Caco-2 (cell line): ENCODE measurements at regions of chr13 and their contacts with region 1.

Region 1: DNA sequence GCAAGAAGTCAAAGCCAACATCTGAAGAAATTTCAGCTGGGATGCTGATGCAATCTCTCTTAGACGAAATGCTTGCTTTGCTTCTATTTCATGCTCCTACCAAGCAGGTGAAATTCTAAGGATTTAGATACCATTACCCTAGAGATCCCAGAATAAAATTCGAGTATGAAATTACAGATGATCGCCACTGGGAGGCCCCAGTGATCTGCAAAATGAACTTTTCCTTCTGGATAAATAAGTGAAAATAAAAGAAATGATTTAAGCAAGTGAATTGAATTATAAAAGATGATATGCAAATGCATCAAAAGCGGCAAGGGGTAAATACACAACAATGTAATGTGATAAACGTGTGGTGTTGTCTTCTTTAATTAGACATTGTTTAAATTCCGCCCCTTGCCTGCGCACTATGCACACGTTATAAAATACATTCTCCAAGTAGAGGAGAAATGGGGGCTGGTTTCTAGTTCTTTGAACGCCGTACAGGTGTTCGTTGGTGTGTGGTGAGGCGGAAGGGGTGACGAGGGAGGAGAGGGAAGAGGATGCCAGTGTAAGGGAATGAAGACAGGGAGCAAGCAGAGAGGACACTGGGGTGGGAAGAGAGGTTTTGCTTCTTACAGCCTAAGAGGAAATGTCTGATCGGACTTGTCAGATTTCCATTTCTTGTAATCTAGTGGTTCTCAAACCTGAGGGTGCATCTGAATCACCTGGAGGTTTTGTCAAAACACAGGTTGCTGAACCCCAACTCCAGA is 58.0 kb downstream of the ERCC5 start:
- DNase-seq: no peak
- H3K4me3 ChIP-seq: no peak overlapping the region
- H3K4me3 Mint-ChIP-seq: no peak overlapping the region
- H3K27ac Mint-ChIP-seq: no peak overlapping the region
- H3K4me1 ChIP-seq: peaks cover 43% of the 10 kb centered on the region
- H3K4me1 Mint-ChIP-seq: peaks cover 32% of the 10 kb centered on the region
- H3K27me3 ChIP-seq: no peaks in the 10 kb centered on the region
- H3K27me3 Mint-ChIP-seq: no peaks in the 10 kb centered on the region
- CTCF ChIP-seq: peak; percentile 24 to 56

Region 2: GRCh38 chr13:102870677-102871415 is 33.0 kb before region 1 on chr13:
- CTCF ChIA-PET with region 1: interaction called, 8 read pairs
- POLR2A ChIA-PET with region 1: no interaction called
- intact Hi-C with region 1: loop called (anchors 1 kb)
- DNase-seq: peak; percentile 70 to 76
- H3K4me3 ChIP-seq: no peak overlapping the region
- H3K4me3 Mint-ChIP-seq: no peak overlapping the region
- H3K27ac Mint-ChIP-seq: no peak overlapping the region
- H3K4me1 ChIP-seq: no peaks in the 10 kb centered on the region
- H3K4me1 Mint-ChIP-seq: no peaks in the 10 kb centered on the region
- H3K27me3 ChIP-seq: no peaks in the 10 kb centered on the region; the same call in 1 of the 2 replicates
- H3K27me3 Mint-ChIP-seq: no peaks in the 10 kb centered on the region
- CTCF ChIP-seq: peak; percentile 76 to 85

Region 3: DNA sequence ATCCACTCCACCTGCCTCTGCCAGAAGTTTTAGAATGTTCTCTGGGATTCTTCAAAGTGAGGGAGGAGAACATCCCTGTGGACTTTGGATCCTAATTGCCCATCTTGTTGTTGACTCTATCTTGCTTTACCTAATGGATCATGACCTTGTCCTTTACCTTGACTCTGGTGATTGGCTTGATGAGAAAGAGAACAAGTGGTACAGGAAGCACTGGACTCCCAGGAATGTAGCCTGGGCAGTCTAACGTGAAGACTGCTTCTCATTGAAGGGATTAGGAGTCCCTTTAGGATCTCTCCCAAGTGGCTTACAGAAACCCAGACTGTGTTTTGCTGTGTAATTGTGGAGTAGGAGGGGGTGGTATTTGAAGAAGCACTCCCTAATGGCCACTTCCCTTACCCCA is 98.4 kb after region 1 on chr13:
- CTCF ChIA-PET with region 1: no interaction called
- POLR2A ChIA-PET with region 1: no interaction called
- intact Hi-C with region 1: loop called (anchors 1 kb)
- DNase-seq: peak; percentile 59 to 63
- H3K4me3 ChIP-seq: no peak overlapping the region
- H3K4me3 Mint-ChIP-seq: no peak overlapping the region
- H3K27ac Mint-ChIP-seq: no peak overlapping the region
- H3K4me1 ChIP-seq: peaks cover 21% of the 10 kb centered on the region
- H3K4me1 Mint-ChIP-seq: peaks cover 15% of the 10 kb centered on the region
- H3K27me3 ChIP-seq: no peaks in the 10 kb centered on the region
- H3K27me3 Mint-ChIP-seq: no peaks in the 10 kb centered on the region
- CTCF ChIP-seq: no peak

Region 4: GRCh38 chr13:103031332-103031873 is 127.6 kb after region 1 on chr13:
- CTCF ChIA-PET with region 1: no interaction called
- POLR2A ChIA-PET with region 1: no interaction called
- intact Hi-C with region 1: loop called (anchors 1 kb)
- DNase-seq: peak in 1 of 2 experiments; percentile 5
- H3K4me3 ChIP-seq: no peak overlapping the region
- H3K4me3 Mint-ChIP-seq: no peak overlapping the region
- H3K27ac Mint-ChIP-seq: peak overlapping the region; percentile 21
- H3K4me1 ChIP-seq: peaks cover 27% of the 10 kb centered on the region
- H3K4me1 Mint-ChIP-seq: peaks cover 6% of the 10 kb centered on the region
- H3K27me3 ChIP-seq: no peaks in the 10 kb centered on the region
- H3K27me3 Mint-ChIP-seq: no peaks in the 10 kb centered on the region
- CTCF ChIP-seq: no peak

Region 5: GRCh38 chr13:103213152-103213551 is 309.3 kb after region 1 on chr13:
- CTCF ChIA-PET with region 1: no interaction called
- POLR2A ChIA-PET with region 1: no interaction called
- intact Hi-C with region 1: loop called (anchors 5 kb)
- DNase-seq: no peak
- H3K4me3 ChIP-seq: no peak overlapping the region
- H3K4me3 Mint-ChIP-seq: no peak overlapping the region
- H3K27ac Mint-ChIP-seq: no peak overlapping the region
- H3K4me1 ChIP-seq: peaks cover 20% of the 10 kb centered on the region
- H3K4me1 Mint-ChIP-seq: peaks cover 7% of the 10 kb centered on the region
- H3K27me3 ChIP-seq: no peaks in the 10 kb centered on the region
- H3K27me3 Mint-ChIP-seq: no peaks in the 10 kb centered on the region
- CTCF ChIP-seq: no peak